ENCODE measurements at regions of chr11 and their contacts with region 1.

Region 1: DNA sequence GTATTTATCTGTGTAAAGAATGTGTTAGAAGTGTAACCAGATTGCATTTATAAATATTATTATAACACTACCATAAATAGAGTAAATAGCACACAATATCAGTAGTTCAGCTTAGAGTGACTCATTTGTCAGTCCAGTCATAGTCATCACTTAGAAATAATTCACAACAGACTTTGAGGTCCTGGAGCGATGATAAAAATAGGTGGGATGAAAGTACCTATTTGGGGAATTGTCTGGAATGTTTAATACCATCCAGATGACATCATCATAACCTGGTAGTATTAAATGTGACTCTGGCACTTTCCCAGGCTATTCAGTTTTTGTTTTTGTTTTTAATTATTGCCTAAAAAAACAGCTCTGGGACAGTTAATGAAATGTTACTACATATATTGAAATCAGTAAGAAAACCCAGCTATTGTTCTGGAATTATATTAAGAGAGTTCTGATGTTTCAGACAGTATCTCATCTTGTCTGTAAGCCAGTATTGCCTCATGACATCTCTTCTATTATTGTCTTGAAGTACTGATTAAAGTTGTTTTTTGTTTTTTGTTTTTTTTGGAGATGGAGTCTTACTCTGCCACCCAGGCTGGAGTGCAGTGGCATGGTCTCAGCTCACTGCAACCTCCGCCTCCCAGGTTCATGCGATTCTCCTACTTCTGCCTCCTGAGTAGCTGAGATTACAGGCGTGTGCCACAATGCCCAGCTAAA is 74.8 kb downstream of the SIK2 start:
- DNase-seq: peak; percentile 72
- ATAC-seq: peak; percentile 94
- H3K4me3 ChIP-seq: no peak overlapping the region
- H3K27ac ChIP-seq: 0 out of 2 replicates have a peak overlapping the region, but pooled peaks have one; percentile 3
- H3K4me1 ChIP-seq: peaks cover 12% of the 10 kb centered on the region
- H3K27me3 ChIP-seq: no peaks in the 10 kb centered on the region
- CTCF ChIP-seq: no peak

Region 2: GRCh38 chr11:111698852-111699559 is 22.0 kb after region 1 on chr11:
- CTCF ChIA-PET with region 1: interaction called, 14 read pairs
- POLR2A ChIA-PET with region 1: no interaction called
- intact Hi-C with region 1: no loop called
- DNase-seq: no peak
- ATAC-seq: no peak
- H3K4me3 ChIP-seq: no peak overlapping the region
- H3K27ac ChIP-seq: no peak overlapping the region
- H3K4me1 ChIP-seq: peaks cover 7% of the 10 kb centered on the region; the same call in 1 of the 2 replicates
- H3K27me3 ChIP-seq: no peaks in the 10 kb centered on the region
- CTCF ChIP-seq: no peak